ENCODE measurements at regions of chr1 and their contacts with region 1.

Region 1: DNA sequence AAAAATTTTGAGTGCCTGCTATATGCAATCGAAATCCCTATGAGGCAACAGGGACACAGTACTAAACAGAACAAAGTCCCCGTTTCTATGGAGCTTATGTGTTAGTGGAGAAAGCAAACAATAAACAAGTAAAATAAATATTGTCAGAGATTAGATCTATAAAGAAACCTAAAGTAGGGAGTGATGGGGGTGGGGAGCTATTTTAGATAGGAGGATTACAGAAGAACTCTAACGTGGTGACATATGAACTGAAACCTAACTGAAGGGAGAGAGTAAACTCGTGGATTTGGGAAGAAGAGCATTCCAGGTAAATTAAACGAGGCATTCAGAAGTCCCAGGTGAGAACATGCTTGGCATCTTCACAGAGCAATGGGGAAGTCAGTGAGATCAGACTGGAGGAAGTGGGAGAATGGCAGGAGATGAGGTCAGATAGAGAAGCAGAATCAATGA is 154.5 kb downstream of the DENND1B start:
- DNase-seq: no peak
- H3K4me3 ChIP-seq: no peak overlapping the region
- H3K27ac ChIP-seq: no peak overlapping the region
- H3K27me3 ChIP-seq: no peaks in the 10 kb centered on the region
- CTCF ChIP-seq: no peak

Region 2: DNA sequence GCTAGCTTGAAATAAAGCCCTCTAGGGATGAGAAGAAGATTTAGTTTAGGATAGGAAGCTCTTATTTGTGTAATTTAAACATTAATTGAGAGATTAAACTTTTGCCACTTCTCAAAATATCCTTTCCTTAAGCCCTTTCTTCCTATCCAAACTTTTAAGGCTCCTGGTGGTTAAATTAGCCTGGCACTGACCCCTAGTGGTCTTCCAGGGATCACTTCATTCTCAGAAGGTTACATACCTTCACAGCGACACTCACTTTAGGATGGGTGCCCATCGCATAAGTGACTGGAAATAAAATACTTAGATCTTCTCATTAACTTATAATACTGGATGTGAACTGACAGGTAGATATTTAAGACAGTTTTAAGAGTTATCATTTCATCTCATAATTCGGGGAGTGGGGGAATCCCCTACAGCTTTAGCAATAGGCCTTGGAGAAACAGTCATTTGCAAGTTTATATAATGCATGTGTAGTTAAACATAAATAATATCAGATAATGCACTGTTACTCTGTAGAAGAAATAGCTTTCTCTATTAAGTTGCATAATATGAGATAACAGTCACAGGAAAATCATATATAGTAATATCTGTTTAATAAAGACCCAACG is 303.9 kb after region 1 on chr1:
- intact Hi-C with region 1: loop called in 1 of 2 experiments (anchors 5 kb)
- DNase-seq: no peak
- H3K4me3 ChIP-seq: no peak overlapping the region
- H3K27ac ChIP-seq: no peak overlapping the region
- H3K27me3 ChIP-seq: peaks cover 0 to 93% (median 55%) of the 10 kb centered on the region in 45 donors
- CTCF ChIP-seq: peak in 55 of 56 donors; percentile 17 to 82 (median 63)

Measured in dorsolateral prefrontal cortex (tissue), 120 donors.